Ovary (tissue), 10 donors: ENCODE measurements at regions of chr1 and their contacts with region 1.

Region 1: DNA sequence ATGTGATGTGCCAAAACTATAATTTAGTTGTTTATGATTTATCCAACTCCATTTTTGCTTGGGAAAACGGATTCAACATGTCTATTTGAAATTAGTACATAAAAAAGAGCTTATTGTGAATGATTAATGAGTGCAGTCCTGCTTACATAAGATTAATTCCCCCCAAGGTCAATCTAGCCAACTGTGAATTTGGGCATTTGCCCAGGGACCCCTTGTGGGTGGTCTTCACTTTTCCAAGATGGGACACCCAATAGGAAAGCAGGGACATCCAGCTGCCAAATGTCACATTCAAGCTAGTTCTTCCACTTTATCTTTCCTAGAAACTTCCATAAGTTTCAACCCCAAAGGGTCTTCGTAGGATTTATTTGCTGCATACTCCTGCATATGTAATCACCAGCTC is 362.4 kb upstream of the PKN2 start:
- DNase-seq: no peak
- H3K4me3 ChIP-seq: no peak overlapping the region
- H3K27ac ChIP-seq: no peak overlapping the region
- H3K4me1 ChIP-seq: no peaks in the 10 kb centered on the region
- H3K27me3 ChIP-seq: no peaks in the 10 kb centered on the region
- CTCF ChIP-seq: no peak
- EP300 ChIP-seq: no peak
- POLR2A ChIP-seq: no peak

Region 2: DNA sequence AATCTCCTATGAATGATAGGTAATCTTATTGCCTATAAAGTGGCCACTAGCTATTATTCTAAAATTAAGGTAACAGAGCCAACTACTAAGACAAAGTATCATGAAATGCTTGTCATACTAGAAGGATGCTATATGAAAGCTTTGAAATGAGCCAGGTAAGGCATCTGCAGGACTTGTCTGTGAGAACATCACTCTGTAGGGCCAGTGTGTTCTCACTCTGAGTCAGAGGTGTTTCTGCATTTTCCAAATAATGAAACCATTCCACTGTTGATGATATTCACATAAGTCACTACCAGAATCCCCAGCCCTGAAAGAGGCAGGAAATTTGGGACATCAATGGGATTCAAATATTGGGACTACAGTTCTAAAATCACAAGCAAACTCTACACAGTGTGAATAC is 976.8 kb after region 1 on chr1:
- intact Hi-C with region 1: loop called in 1 of 4 experiments (anchors 5 kb)
- DNase-seq: no peak
- H3K4me3 ChIP-seq: no peak overlapping the region
- H3K27ac ChIP-seq: no peak overlapping the region
- H3K4me1 ChIP-seq: no peaks in the 10 kb centered on the region
- H3K27me3 ChIP-seq: no peaks in the 10 kb centered on the region
- CTCF ChIP-seq: no peak
- EP300 ChIP-seq: no peak
- POLR2A ChIP-seq: no peak